PC-3 (cell line): ENCODE measurements at regions of chr22 and their contacts with region 1.

Region 1: GRCh38 chr22:45577746-45578523 is 75.3 kb downstream of the FBLN1 start:
- DNase-seq: peak; percentile 88
- ATAC-seq: peak; percentile 93
- H3K4me3 ChIP-seq: no peak overlapping the region
- H3K27ac ChIP-seq: no peak overlapping the region
- H3K4me1 ChIP-seq: no peaks in the 10 kb centered on the region
- H3K27me3 ChIP-seq: no peaks in the 10 kb centered on the region
- CTCF ChIP-seq: peak; percentile 92

Region 2: GRCh38 chr22:45638834-45639746 is 61.2 kb after region 1 on chr22:
- CTCF ChIA-PET with region 1: no interaction called
- POLR2A ChIA-PET with region 1: no interaction called
- intact Hi-C with region 1: loop called (anchors 2 kb)
- DNase-seq: peak; percentile 77
- ATAC-seq: peak; percentile 88
- H3K4me3 ChIP-seq: peak overlapping the region; percentile 41; the same call in 1 of the 2 replicates
- H3K27ac ChIP-seq: peak overlapping the region; percentile 96
- H3K4me1 ChIP-seq: peaks cover 23% of the 10 kb centered on the region
- H3K27me3 ChIP-seq: no peaks in the 10 kb centered on the region
- CTCF ChIP-seq: no peak

Region 3: GRCh38 chr22:45731798-45732495 is 154.0 kb after region 1 on chr22:
- CTCF ChIA-PET with region 1: no interaction called
- POLR2A ChIA-PET with region 1: no interaction called
- intact Hi-C with region 1: no loop called
- DNase-seq: peak; percentile 15
- ATAC-seq: peak; percentile 31; the same call in 1 of the 2 replicates
- H3K4me3 ChIP-seq: no peak overlapping the region
- H3K27ac ChIP-seq: no peak overlapping the region
- H3K4me1 ChIP-seq: peaks cover 2% of the 10 kb centered on the region; the same call in 1 of the 2 replicates
- H3K27me3 ChIP-seq: no peaks in the 10 kb centered on the region
- CTCF ChIP-seq: peak; percentile 62